Sigmoid colon (tissue), 7 donors: ENCODE measurements at regions of chr10 and their contacts with region 1.

Region 1: DNA sequence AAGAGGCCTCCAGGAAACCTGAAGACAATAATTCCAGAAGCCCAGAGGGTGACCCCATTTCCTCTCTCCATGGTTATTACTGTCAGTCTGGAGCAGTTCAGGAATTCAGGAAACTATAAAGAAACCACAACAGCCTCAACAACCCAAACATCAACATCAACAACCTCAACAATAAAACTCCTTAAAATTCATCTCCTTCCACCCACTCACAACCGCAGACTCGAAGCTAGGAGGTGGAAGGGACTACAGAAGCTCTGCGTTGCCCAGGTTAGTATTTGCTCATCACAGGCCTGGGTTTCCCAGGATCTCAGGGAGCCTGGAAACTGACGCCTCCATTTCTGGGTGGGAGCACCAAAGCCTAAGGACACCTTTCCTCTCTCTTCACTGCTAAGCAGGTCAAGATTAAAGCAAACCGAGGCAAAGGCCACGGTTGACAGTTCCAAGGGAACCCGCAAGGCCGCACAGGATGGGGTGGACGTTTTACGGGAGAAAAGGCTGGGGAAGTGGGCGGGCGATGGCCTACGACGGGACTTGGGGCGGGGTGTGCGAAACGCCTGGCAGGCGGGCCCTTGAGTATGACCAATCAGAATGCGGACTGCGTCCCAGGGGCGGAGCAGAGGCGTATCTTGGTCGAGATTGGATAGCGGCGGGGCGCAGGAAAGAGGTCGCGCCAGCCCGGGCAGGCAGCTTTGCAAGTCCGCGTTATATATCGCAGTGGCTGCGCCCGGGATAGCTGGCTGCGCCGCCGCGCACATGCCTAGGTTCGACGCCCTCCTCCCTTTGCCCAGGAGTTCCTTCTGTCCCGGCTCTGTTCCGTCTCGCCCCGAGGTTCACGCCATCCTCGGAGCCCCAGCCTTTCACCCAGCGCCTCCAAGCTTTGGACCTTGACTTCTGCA is at the start of gene ELOVL3:
- DNase-seq: peak; percentile 96
- H3K4me3 ChIP-seq: peak within 1 kb of the TSS; percentile 4 to 28 (median 23)
- H3K27ac ChIP-seq: peak within 1 kb of the TSS; percentile 37 to 78 (median 63)
- H3K4me1 ChIP-seq: peaks cover 0 to 26% (median 23%) of the 10 kb centered on the region in 4 donors
- H3K27me3 ChIP-seq: peaks cover 3 to 30% (median 11%) of the 10 kb centered on the region in 3 donors
- CTCF ChIP-seq: no peak
- EP300 ChIP-seq: no peak
- POLR2A ChIP-seq: no peak
- total RNA-seq, gene ELOVL3: 0.71 TPM in 1 of 4 donors, not detected in the others

Region 2: DNA sequence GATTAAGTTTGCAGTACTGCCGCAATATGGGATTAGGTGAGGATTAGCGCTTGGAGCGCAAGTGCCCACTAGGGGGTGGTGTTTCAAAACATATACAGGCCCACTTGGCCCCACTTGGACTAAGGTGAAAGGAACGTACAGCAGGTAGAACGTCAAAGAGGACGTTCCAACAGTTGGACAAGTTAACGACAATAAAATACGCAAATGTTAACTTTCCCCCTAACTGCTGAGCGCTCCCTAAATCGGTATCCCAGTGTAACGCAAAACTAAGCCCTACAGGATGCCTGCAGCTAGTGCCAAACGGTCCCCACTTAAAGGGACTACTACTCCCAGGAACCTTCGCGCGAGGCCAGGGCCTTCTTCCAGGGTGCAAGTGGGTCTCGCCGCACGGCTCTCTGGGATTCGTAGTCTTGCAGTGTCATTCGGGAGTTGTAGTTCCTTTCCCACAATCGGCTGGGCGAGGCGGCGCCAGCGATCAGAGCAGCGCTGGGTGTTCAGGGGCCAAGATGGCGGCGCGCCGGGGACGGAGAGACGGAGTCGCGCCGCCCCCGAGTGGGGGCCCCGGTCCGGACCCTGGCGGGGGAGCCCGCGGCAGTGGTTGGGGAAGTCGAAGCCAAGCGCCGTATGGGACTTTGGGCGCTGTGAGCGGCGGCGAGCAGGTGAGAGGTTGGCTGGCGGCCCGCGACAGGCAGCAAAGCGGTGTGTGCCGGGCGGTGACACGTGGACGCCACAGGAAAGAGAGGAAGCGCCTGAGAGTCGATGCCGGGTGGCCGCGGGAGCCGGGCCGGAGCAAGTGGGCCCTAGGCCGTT is 93.1 kb before region 1 on chr10 and contains the start of gene PPRC1:
- intact Hi-C with region 1: no loop called
- DNase-seq: peak; percentile 99
- H3K4me3 ChIP-seq: peak within 1 kb of the TSS; percentile 80 to 96 (median 86)
- H3K27ac ChIP-seq: peak within 1 kb of the TSS; percentile 93 to 99 (median 96)
- H3K4me1 ChIP-seq: peaks cover 0 to 38% (median 34%) of the 10 kb centered on the region in 4 donors
- H3K27me3 ChIP-seq: no peaks in the 10 kb centered on the region
- CTCF ChIP-seq: peak; percentile 87 to 98 (median 93)
- EP300 ChIP-seq: peak in 2 of 4 donors; percentile 32 to 50
- POLR2A ChIP-seq: peak; percentile 37 to 53
- total RNA-seq, gene PPRC1: 11.0 to 39.9 (median 13.0) TPM

Region 3: DNA sequence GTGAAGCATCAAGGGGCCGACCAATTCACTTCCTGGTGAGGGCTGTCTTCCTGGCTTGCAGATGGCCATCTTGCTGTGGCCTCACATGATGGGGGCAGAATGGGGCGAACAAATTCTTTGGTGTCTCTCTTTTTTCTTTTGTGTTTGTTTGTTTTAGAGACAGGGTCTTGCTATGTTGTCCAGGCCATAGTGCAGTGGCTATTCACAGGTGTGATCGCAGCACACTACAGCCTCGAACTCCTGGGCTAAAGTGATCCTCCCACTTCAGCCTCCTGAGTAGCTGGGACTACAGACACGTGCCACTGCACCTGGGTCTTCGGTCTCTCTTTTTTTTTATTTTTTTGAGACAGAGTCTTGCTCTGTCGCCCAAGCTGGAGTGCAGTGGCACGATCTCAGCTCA is 53.6 kb before region 1 on chr10:
- intact Hi-C with region 1: loop called (anchors 5 kb)
- DNase-seq: no peak
- H3K4me3 ChIP-seq: no peak overlapping the region
- H3K27ac ChIP-seq: no peak overlapping the region
- H3K4me1 ChIP-seq: peaks cover 0 to 6% (median 3%) of the 10 kb centered on the region in 4 donors
- H3K27me3 ChIP-seq: peaks cover 0 to 8% (median 0%) of the 10 kb centered on the region in 3 donors
- CTCF ChIP-seq: no peak
- EP300 ChIP-seq: no peak
- POLR2A ChIP-seq: no peak

Region 4: DNA sequence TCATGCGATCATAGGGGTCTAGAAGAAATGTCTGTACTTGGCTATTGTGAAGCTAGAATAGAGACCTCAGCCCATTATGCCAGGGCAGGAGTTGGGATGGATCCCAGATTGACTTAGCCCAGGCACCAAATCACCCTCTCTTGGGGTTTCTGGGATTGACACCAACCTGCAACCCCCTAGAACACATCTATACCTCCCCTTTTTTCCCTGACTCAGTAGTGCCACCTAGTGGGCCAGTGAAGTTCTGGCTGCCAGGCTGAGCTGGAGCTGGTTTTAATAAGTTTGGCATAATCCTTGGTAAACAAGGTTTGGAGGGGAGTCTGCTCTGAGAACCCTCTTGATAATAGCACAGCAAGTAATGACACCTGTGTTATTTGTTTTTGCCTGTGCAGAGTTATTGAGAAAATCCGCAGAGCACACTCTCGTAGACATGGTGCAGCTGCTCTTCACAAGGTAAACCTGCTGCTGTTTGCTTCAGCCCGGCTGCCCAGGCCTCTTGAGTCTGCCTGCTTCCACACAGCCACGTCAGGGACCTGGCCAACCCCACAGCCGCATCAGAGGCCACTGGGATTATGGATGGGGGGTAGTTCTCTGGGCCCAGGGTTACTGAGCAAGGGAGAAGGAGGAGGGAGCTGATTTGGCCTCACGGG is 126.3 kb after region 1 on chr10:
- intact Hi-C with region 1: loop called (anchors 1 kb)
- DNase-seq: peak; percentile 70
- H3K4me3 ChIP-seq: no peak overlapping the region
- H3K27ac ChIP-seq: no peak overlapping the region
- H3K4me1 ChIP-seq: no peaks in the 10 kb centered on the region
- H3K27me3 ChIP-seq: no peaks in the 10 kb centered on the region
- CTCF ChIP-seq: peak; percentile 57 to 87 (median 82)
- EP300 ChIP-seq: no peak
- POLR2A ChIP-seq: no peak

Region 5: DNA sequence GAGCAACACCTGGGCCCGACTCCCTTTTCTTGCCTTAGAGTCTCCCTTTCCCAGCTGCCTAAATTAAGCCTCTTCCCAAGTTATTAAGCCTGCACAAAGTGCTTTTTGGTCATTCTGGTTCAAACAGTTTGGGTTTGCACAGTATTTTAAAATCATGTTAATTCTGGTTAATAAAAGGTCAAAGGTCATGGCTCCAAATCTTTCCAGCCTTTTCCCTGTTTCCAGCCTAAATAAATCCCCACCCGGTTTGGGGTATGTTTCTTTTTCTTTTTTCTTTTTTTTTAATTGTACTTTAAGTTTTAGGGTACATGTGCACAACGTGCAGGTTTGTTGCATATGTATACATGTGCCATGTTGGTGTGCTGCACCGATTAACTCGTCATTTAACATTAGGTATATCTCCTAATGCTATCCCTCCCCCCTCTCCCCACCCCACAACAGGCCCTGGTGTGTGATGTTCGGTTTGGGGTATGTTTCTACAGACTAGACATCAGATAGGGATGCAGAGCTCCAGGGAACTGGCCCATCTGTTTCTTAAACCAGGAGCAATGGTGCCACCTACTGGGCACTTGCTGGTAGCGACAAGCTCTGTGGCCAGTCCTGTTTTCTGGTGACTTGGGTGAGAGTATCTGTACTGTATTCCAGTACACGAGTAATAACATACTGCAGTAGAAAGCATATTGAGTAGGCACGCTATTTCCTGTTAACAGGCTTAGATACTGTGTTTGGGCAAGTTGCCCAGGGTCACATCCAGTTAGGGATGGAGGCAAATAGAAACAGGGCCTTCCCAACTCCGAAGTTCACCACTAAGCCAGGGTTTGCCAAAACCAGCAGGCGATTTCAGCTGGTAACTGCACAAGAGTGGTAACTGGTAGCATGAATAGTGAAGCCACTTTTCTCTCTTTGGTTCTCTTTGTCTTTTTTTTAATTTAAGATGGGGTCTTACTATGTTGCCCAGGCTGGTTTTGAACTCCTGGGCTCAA is 357.8 kb after region 1 on chr10:
- intact Hi-C with region 1: loop called (anchors 10 kb)
- DNase-seq: peak; percentile 94
- H3K4me3 ChIP-seq: no peak overlapping the region
- H3K27ac ChIP-seq: peak overlapping the region in 1 of 4 donors; percentile 41
- H3K4me1 ChIP-seq: peaks cover 0 to 26% (median 15%) of the 10 kb centered on the region in 4 donors
- H3K27me3 ChIP-seq: no peaks in the 10 kb centered on the region
- CTCF ChIP-seq: peak; percentile 47 to 84 (median 78)
- EP300 ChIP-seq: no peak
- POLR2A ChIP-seq: no peak